Activated CD4-positive, alpha-beta T cell treated with anti-CD3 and anti-CD28 coated beads, Interleukin-2, amount 10 ng/mL, durations not matched to agents 24 days and 14 days (primary cell): ENCODE measurements at regions of chrX and their contacts with region 1.

Region 1: GRCh38 chrX:48714573-48714972 is 18.0 kb downstream of the SUV39H1 start:
- DNase-seq: peak; percentile 72
- H3K4me3 Mint-ChIP-seq: peak overlapping the region; percentile 85
- H3K27ac Mint-ChIP-seq: peak overlapping the region; percentile 95
- H3K4me1 Mint-ChIP-seq: peaks cover 73% of the 10 kb centered on the region
- H3K27me3 Mint-ChIP-seq: no peaks in the 10 kb centered on the region

Region 2: GRCh38 chrX:48696301-48697181 is 18.0 kb before region 1 on chrX and contains the start of gene SUV39H1:
- intact Hi-C with region 1: loop called (anchors 1 kb)
- DNase-seq: peak; percentile 96
- H3K4me3 Mint-ChIP-seq: peak within 1 kb of the TSS; percentile 93
- H3K27ac Mint-ChIP-seq: peak within 1 kb of the TSS; percentile 98
- H3K4me1 Mint-ChIP-seq: peaks cover 28% of the 10 kb centered on the region
- H3K27me3 Mint-ChIP-seq: no peaks in the 10 kb centered on the region
- total RNA-seq, gene SUV39H1: 27.6 and 32.2 TPM in 2 replicates

Region 3: GRCh38 chrX:48751343-48751742 is 36.8 kb after region 1 on chrX:
- intact Hi-C with region 1: loop called (anchors 5 kb)
- DNase-seq: peak; percentile 58
- H3K4me3 Mint-ChIP-seq: peak overlapping the region; percentile 40
- H3K27ac Mint-ChIP-seq: peak overlapping the region; percentile 60
- H3K4me1 Mint-ChIP-seq: peaks cover 6% of the 10 kb centered on the region
- H3K27me3 Mint-ChIP-seq: peaks cover 2% of the 10 kb centered on the region

Region 4: GRCh38 chrX:48789366-48790220 is 75.0 kb after region 1 on chrX:
- intact Hi-C with region 1: no loop called
- DNase-seq: no peak
- H3K4me3 Mint-ChIP-seq: no peak overlapping the region
- H3K27ac Mint-ChIP-seq: no peak overlapping the region
- H3K4me1 Mint-ChIP-seq: peaks cover 11% of the 10 kb centered on the region
- H3K27me3 Mint-ChIP-seq: peaks cover 13% of the 10 kb centered on the region